Esophagus muscularis mucosa (tissue), 4 donors: ENCODE measurements at regions of chr15 and their contacts with region 1.

Region 1: DNA sequence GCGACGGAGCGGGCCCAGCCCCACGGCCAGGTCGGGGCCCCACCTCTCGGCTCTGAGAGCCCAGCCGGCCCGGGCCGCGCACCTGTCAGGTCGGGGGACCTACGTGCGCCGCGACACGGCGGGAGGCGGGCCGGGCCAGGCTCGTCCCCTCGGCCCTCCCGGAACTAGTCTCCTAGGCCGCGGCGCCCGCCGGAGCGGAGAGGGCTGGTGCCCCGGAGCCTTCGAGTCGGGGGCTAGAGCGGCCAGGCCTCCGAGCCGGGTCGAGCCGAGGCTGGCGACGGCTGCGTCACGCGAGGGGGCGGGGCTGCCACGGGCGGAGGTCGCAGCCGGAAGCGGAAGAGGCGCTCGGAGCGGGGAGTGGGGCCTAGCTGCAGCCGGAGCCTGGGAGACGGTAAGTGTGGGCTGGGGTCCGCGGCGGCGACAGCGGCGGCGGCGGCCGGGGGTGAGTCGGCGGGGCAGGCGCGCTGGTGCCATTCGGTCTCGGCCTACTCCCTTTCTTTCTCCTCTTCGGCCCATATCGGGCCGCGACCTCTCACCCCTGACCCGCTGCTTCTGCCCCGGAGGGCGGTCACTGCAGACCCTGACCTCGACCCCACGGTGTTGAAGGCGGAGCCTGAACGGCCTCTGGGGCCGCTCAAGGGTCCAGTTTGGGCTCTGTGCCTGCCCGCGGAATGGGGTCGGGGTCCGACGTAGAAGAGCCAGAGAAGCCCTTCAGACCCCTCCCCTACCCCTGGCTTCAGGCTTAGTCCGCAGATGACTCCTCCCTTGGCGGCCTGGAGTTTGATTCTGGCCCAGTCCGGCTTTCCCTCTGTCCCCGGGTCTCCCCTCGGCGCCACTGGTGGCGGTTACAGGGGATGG is at the start of gene CLK3:
- DNase-seq: peak; percentile 96
- H3K4me3 ChIP-seq: peak within 1 kb of the TSS; percentile 97 to 100 (median 98)
- H3K27ac ChIP-seq: peak within 1 kb of the TSS; percentile 97 to 100 (median 99)
- H3K4me1 ChIP-seq: peaks cover 45 to 62% (median 50%) of the 10 kb centered on the region in 4 donors
- H3K27me3 ChIP-seq: no peaks in the 10 kb centered on the region
- CTCF ChIP-seq: peak in 1 of 3 experiments; percentile 25
- EP300 ChIP-seq: no peak
- POLR2A ChIP-seq: peak; percentile 65
- total RNA-seq, gene CLK3: 74.6 to 89.8 (median 80.7) TPM

Region 2: DNA sequence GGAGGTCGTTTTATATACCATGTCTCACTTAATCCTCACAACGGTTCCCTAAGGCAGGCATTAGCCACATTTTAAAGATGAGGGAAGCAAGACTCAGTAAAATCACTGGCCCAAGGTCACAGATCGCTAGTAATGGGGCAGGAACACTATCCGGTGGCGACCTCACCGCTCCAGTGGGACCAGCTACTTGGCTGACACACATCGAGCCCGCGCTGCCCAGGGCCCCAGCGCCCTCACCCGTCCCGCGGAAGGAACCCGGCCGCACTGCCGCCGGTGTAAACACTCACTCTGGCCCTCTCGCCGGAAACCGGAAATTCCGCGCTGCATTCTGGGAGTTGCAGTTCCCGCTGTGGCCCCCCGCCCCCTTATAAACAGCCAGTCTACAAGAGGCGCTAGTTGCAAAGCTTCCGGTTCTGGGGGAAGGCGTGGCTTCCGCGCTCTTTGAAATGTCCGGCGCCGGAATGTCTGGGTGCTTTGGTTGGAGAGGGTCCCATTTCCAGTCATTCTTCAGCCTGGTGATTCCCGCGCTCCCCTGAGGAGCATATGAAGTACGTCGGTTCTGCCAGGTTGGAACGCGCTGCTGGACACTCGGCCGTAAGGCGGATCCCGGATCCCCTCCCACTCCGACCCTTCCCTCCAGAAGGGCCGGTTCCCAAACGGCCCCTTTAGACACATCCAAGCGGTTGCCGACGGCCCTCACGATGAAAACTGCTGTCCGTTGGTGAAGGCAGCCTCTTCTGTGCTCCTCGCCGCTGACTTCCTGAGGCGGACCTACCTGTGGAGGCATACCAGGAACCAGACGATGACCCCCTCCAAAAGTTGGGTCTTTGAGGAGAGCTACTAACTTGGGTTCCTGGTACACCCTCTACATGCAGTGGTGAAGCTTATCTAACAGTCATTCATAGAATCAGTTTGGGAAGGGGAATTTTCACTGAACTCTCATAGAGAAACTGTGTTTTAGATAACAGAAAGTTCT is 154.6 kb before region 1 on chr15 and contains the start of gene UBL7:
- intact Hi-C with region 1: loop called (anchors 5 kb)
- DNase-seq: peak; percentile 99
- H3K4me3 ChIP-seq: peak within 1 kb of the TSS; percentile 71 to 83 (median 78)
- H3K27ac ChIP-seq: peak within 1 kb of the TSS; percentile 85 to 93 (median 88)
- H3K4me1 ChIP-seq: peaks cover 17 to 31% (median 24%) of the 10 kb centered on the region in 4 donors
- H3K27me3 ChIP-seq: no peaks in the 10 kb centered on the region
- CTCF ChIP-seq: peak; percentile 12 to 41 (median 19)
- EP300 ChIP-seq: no peak
- POLR2A ChIP-seq: peak; percentile 75
- total RNA-seq, gene UBL7: 52.7 to 69.7 (median 60.5) TPM

Region 3: DNA sequence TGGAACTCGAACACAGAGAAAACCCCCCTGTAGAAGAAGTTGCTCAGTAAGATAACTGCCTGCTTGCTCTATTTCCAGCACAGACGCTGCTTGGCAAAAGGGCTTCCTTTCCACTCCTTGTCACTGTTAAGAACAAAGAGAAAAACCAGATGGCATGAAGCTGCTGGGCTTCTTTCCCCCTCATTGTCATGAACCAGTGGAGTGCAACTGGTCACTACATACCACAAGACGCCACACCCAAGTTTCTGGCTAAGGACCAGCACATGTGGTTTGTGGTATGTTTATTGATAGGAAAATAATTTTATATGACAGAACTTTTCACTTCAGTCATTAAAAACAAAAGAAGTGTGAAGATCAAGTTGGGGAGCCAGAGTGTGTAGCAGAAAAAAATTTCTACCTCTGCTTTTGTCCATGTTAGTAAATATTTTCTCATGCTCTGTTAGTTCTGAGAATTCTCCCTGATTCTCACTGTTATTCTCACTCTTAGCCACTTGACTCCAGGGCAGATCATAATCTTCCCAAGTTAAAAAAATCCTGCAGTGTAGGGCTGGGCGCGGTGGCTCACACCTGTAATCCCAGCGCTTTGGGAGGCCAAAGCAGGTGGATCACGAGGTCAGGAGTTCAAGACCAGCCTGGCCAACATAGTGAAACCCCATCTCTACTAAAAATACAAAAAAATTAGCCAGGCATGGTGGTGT is 37.8 kb after region 1 on chr15:
- intact Hi-C with region 1: no loop called
- DNase-seq: no peak
- H3K4me3 ChIP-seq: no peak overlapping the region
- H3K27ac ChIP-seq: peak overlapping the region; percentile 15 to 54 (median 36)
- H3K4me1 ChIP-seq: peaks cover 47 to 70% (median 55%) of the 10 kb centered on the region in 4 donors
- H3K27me3 ChIP-seq: no peaks in the 10 kb centered on the region
- CTCF ChIP-seq: no peak
- EP300 ChIP-seq: no peak
- POLR2A ChIP-seq: no peak